WTC11 (cell line): ENCODE measurements at regions of chr3 and their contacts with region 1.

Region 1: GRCh38 chr3:46558184-46559043 is 7.7 kb downstream of the LRRC2 start:
- DNase-seq: peak; percentile 76
- ATAC-seq: peak; percentile 88
- H3K4me3 Mint-ChIP-seq: peak overlapping the region; percentile 57
- H3K27ac Mint-ChIP-seq: peak overlapping the region; percentile 92
- H3K4me1 Mint-ChIP-seq: peaks cover 60% of the 10 kb centered on the region
- H3K27me3 Mint-ChIP-seq: no peaks in the 10 kb centered on the region; the same call in 1 of the 2 replicates
- CTCF ChIP-seq: no peak

Region 2: DNA sequence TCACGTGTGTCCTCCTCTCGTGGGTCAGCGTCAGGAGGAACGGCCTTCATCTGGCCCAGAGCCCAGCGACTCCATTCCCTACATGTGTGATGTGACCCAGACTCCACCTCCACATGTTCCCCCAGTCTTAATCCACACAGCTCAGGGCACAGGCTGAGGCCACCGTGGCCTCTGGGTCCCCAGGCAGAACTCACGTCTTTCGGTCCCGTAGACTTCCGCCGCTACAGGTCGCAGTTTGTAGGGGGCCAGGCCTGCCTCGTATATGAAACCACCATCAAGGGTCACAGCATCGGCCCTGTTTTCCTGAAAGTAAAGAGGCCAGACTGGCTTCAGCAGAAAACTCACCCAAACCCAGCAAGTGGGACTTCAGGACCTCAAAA is 102.3 kb before region 1 on chr3:
- CTCF ChIA-PET with region 1: no interaction called
- POLR2A ChIA-PET with region 1: no interaction called
- DNase-seq: no peak
- ATAC-seq: no peak
- H3K4me3 Mint-ChIP-seq: no peak overlapping the region
- H3K27ac Mint-ChIP-seq: no peak overlapping the region
- H3K4me1 Mint-ChIP-seq: no peaks in the 10 kb centered on the region
- H3K27me3 Mint-ChIP-seq: 0 out of 2 replicates have a peak, but pooled peaks cover 3% of the 10 kb centered on the region
- CTCF ChIP-seq: no peak

Region 3: GRCh38 chr3:46542801-46543201 is 15.6 kb before region 1 on chr3:
- CTCF ChIA-PET with region 1: interaction called, 30 read pairs
- POLR2A ChIA-PET with region 1: interaction called, 6 read pairs
- DNase-seq: no peak
- ATAC-seq: no peak
- H3K4me3 Mint-ChIP-seq: no peak overlapping the region
- H3K27ac Mint-ChIP-seq: peak overlapping the region; percentile 90
- H3K4me1 Mint-ChIP-seq: peaks cover 68% of the 10 kb centered on the region
- H3K27me3 Mint-ChIP-seq: no peaks in the 10 kb centered on the region
- CTCF ChIP-seq: no peak